Dorsolateral prefrontal cortex (tissue), 120 donors: ENCODE measurements at regions of chr1 and their contacts with region 1.

Region 1: DNA sequence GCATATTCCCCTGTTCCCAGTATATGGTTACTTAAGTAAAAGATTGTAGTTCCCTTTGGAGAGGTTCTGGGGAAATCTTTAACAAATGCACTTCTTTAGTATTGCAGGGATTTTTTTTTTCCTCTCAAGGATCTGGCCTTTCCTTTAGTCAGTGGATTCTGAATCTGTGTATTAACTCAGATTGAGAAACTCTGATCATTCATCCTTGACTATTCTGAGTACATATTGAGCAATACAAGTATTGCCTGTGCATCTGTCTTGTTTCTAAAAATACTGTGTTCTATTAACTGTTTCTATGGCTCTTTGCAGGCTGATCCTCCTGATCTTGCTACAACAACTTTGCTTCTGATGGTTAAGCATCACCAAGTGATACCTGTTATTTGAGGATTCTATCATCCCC is 67.8 kb upstream of the FGGY start:
- DNase-seq: no peak
- H3K4me3 ChIP-seq: no peak overlapping the region
- H3K27ac ChIP-seq: no peak overlapping the region
- H3K27me3 ChIP-seq: no peaks in the 10 kb centered on the region
- CTCF ChIP-seq: no peak

Region 2: DNA sequence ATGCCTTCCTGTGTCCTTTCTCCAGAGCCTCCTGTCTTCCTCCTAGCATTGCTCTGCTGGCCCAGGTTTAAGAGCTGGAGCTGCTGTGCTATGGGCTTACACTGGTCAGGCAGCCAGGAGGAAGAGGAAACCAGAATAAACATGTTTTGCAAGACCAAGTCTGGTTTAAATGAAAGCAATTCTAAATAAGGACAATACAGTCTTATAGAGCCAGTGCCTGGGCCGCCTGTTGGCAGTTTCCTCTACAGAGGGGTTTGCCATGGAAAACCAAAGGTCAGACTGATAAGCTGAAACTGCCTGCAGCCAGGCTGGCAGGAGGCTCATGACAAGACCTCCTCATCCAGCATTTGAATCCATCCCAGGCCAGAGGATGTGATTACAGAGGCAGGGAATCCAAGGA is 25.1 kb before region 1 on chr1:
- intact Hi-C with region 1: loop called in 1 of 2 experiments (anchors 2 kb)
- DNase-seq: peak in 1 of 10 donors; percentile 9
- H3K4me3 ChIP-seq: no peak overlapping the region
- H3K27ac ChIP-seq: peak overlapping the region in 1 of 59 donors; percentile 15
- H3K27me3 ChIP-seq: peaks cover 0 to 4% (median 0%) of the 10 kb centered on the region in 45 donors
- CTCF ChIP-seq: no peak